ENCODE measurements at regions of chr2 and their contacts with region 1.

Region 1: GRCh38 chr2:171225302-171225980 is 64.7 kb upstream of the TLK1 start:
- DNase-seq: peak; percentile 91
- H3K4me3 ChIP-seq: peak overlapping the region in 1 of 3 experiments; percentile 20
- H3K27ac ChIP-seq: no peak overlapping the region
- H3K4me1 ChIP-seq: peaks cover 28% of the 10 kb centered on the region
- H3K27me3 ChIP-seq: no peaks in the 10 kb centered on the region
- CTCF ChIP-seq: peak; percentile 55 to 68

Region 2: DNA sequence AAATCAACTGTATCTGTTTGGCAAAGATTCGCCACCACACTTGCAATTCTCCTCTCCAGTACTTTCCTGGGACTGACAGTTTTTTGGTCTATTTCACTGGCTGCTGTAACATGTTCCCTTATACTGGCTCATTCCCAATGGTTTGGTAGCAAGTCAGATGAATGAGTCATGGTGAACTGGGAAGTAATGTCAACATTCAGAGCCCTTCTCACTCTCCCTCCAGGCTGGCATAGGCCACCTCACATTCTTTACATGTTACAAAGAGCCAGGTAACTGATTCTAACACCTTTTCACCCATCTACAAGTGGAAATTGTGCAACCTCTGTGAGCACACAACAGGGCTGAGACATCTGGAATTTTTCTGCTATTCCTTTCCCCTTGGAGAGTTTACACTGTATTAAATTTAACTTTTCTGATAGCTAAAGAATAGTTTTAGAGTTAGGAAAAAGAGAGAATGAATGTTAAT is 46.6 kb after region 1 on chr2:
- CTCF ChIA-PET with region 1: no interaction called
- dilution Hi-C with region 1: no loop called
- in situ Hi-C with region 1: no loop called
- intact Hi-C with region 1: loop called (anchors 2 kb)
- DNase-seq: peak; percentile 98
- H3K4me3 ChIP-seq: no peak overlapping the region
- H3K27ac ChIP-seq: peak overlapping the region; percentile 50
- H3K4me1 ChIP-seq: peaks cover 17% of the 10 kb centered on the region
- H3K27me3 ChIP-seq: no peaks in the 10 kb centered on the region
- CTCF ChIP-seq: no peak

Measured in mammary epithelial cell (primary cell).